ENCODE measurements at regions of chr3 and their contacts with region 1.

Region 1: DNA sequence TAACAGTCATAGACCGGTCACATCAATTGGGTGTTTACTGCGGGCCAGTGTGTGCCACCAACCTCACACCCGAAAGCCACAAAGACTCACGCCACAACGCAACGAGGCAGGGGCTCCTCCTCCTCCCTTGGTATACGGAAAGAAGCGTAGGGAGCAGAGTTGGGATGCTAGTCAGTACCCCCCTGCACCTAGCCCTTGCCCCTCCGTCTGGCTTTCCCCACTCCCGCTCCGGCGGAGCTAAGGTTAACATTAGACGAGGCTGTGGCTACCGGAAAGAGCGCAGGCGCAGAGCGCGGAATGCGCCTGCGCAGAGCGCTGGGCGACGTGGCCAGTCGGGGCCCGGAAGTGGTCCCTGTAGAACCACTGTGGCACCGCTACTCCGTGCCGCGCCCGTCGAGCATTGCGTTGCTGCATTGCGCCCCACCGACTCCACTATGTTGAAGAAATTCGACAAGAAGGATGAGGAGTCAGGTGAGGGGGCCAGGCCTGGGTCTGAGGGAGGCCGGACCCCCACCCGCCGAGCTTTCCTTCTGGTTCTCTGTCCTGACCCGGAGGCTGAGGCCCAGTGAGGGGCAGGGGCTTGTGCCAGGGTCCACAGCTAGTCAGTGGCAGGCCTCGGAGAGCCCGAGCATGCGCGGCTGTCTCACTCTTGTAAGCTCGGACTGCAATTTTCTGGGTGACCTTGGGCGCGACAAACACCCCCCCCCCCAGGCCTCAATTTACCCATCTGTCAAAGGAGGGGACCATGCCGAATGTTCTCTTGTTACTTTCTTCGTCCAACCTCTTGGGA is at the start of gene COPG1:
- DNase-seq: peak; percentile 97
- CTCF ChIP-seq: no peak

Region 2: GRCh38 chr3:129016356-129016719 is 233.1 kb before region 1 on chr3:
- CTCF ChIA-PET with region 1: interaction called, 15 read pairs
- POLR2A ChIA-PET with region 1: no interaction called
- DNase-seq: peak; percentile 47
- CTCF ChIP-seq: no peak

Region 3: DNA sequence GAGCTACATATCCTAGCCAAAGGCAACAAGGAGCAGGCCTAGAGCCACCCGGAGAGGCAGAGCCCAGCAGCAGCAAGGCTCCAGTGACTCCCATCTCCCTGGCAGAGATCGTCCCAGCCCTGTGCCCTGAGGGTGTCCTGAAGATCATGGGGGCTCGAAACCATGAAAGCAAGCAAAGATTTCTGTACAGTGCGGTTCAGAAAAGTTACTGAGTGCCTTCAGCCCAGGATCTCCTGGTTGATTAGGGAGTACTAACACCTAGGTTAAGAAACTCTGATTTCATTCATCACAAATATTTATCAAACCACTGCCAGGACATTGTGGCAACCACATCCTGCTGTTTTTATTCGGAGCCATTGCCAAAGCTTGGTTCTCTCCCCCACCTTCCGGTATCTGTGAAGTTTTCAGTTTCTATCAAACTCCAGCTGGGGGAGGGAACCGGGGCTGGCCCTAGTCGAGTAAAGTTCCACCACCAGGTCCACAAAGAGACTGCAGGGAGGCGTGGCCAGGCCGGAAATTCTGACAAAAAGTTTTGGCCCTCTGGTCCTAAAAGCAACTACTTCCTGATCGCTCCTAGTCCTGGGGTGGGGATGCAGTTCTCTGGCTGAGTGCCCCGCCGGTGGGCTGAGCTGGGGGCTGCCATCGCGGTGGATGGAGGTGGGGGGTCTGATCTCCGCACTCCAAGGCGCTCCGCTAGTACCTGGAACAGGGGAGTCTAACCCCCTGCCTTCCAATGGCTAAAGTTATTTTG is 129.0 kb before region 1 on chr3:
- CTCF ChIA-PET with region 1: interaction called, 21 read pairs
- POLR2A ChIA-PET with region 1: no interaction called
- DNase-seq: peak; percentile 92
- CTCF ChIP-seq: no peak

Region 4: DNA sequence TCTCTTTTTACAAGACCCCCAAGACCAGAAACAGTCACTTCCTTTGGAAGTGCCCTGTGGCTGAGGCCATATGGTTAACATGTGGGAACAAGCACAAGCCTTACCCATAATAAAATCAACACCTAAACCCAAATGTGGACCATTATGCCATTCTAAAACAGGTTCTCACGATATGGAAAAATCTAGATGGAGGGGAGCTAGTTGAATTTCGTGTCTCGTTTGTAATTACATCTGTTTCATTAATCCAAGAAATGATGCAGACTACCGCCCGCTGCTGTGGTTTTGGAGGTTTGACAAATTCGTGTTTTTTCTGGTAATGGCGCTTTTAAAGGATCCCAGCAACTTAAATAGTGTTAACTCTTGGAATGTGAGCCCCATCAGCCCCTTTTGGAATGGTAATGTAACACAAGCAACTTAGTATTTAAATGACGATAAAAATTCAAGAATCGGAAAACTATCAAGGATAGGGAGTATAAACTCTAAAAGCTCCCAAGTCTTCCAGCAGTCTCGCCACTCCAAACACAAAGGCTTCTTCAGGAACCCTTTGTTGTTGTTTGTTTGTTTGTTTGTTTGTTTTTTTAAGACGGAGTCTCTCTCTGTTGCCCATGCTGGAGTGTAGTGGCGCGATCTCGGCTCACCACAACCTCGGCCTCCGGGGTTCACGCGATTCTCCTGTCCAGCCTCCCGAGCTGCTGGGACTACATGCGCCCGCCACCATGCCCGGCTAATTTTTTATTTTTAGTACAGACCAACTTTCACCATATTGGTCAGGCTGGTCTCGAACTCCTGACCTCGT is 66.9 kb before region 1 on chr3:
- CTCF ChIA-PET with region 1: interaction called, 12 read pairs
- POLR2A ChIA-PET with region 1: no interaction called
- DNase-seq: no peak
- CTCF ChIP-seq: no peak

Region 5: GRCh38 chr3:129224984-129225393 is 24.5 kb before region 1 on chr3:
- CTCF ChIA-PET with region 1: interaction called, 50 read pairs
- POLR2A ChIA-PET with region 1: no interaction called
- DNase-seq: no peak
- CTCF ChIP-seq: no peak

Region 6: DNA sequence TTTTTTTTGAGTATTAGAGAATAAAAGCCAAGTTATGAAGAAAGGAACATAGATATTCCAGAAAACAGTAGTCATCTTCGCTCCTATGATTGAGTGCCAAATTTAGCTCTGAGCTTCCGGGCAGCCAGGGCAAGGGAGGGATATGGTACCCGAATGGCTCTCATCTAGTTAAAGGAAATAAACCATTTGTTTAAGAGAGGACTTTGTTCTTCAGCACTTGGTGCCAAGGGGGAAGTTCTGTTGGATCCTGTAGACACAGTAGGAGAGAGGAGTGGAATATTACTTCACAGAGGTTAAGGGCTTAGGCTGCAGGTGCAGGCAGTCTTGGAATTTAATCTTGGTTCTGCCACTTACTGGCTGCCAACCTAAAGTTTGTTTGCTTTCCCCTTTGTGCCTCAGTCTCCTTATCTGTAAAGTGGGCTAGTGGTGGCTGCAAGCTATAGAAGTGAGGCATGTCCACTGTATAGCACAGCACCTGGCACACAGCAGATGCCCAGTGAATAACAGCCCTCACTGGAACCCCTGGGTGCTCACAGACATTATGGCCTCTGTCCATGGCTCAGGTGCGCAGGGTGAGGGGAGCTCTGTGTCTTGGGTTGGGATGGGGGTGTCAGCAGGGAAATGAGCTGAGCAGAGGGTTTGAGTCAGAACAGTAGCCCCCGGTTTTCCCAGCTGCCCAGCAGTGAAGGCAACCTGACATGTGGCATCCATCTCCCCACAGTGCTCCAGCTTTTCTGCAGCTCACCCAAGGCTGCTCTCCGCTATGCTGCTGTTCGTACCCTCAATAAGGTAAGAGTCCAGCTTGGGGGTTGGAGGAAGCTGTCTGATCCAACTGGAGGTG is 10.4 kb after region 1 on chr3:
- CTCF ChIA-PET with region 1: interaction called, 20 read pairs
- POLR2A ChIA-PET with region 1: interaction called, 3 read pairs
- DNase-seq: no peak
- CTCF ChIP-seq: no peak

Region 7: GRCh38 chr3:129278439-129278970 is 29.0 kb after region 1 on chr3 and contains the start of gene HMCES:
- CTCF ChIA-PET with region 1: interaction called, 13 read pairs
- POLR2A ChIA-PET with region 1: interaction called, 3 read pairs
- DNase-seq: peak; percentile 92
- CTCF ChIP-seq: no peak

Region 8: DNA sequence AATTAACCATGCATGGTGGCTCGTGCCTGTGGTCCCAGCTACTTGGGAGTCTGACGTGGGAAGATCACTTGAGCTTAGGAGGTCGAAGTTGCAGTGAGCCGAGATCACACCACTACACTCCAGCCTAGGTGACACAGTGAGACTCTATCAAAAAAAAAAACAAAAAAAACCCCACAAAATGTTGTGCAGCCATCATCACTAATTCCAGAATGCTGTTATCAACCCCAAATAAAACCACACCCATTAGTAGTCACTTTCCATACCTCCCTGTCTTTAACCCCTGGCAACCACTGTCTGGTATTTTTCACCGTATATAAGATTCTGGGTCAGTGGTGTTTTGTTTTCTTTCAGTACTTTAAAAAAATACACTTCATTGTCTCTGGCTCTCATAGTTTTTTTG is 45.8 kb after region 1 on chr3:
- CTCF ChIA-PET with region 1: no interaction called
- POLR2A ChIA-PET with region 1: no interaction called
- DNase-seq: no peak
- CTCF ChIP-seq: no peak

Measured in GM10248 (cell line).